ENCODE measurements at regions of chr16 and their contacts with region 1.

Region 1: GRCh38 chr16:47141773-47142485 is 1.8 kb downstream of the NETO2 start:
- DNase-seq: peak; percentile 56 to 67
- ATAC-seq: peak; percentile 79 to 82
- H3K4me3 ChIP-seq: peak overlapping the region; percentile 55 to 78 (median 64)
- H3K27ac ChIP-seq: peak overlapping the region in 1 of 4 donors; percentile 57
- H3K4me1 ChIP-seq: no peaks in the 10 kb centered on the region
- H3K27me3 ChIP-seq: no peaks in the 10 kb centered on the region
- CTCF ChIP-seq: peak; percentile 65 to 95 (median 76)
- POLR2A ChIP-seq: no peak

Region 2: DNA sequence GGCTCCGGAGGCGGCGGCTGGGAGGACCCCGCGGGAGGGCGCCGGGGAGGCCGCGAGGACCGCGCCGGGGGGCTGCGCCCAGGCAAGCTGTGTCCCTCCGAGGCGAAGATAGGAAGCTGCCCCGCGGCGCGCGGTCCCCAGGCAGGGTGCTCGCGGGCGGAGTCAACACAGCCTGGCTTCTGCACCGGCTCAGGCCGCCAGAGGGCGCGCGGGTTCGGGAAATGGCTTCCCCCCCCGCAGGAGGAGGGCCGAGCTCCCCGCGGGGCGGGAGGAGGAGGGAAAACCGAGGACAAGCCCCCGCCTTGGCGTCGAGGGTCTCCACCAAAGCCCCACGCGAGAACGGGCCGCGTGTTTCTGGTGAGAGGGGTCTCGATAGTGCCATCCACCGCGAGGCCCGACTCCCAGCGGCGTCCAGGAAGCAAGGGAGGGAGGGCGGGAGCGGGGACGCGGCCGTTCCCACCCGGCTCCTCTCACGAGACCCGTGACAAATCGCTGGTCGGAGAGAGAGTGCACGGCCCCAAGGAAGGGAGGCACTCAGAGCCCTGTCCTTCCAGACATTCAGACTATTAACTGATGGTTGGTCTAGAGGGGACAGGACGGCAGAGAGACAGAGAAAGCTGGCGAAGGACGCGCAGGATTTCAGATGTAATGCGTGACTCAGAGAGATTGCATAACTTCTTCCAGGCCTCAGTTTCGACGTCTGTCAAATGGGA is 104.0 kb before region 1 on chr16:
- in situ Hi-C with region 1: no loop called
- intact Hi-C with region 1: loop called (anchors 5 kb)
- DNase-seq: peak; percentile 56 to 68
- ATAC-seq: peak; percentile 94 to 97
- H3K4me3 ChIP-seq: peak overlapping the region; percentile 64 to 78 (median 66)
- H3K27ac ChIP-seq: peak overlapping the region in 2 of 4 donors; percentile 19 to 46
- H3K4me1 ChIP-seq: no peaks in the 10 kb centered on the region
- H3K27me3 ChIP-seq: no peaks in the 10 kb centered on the region
- CTCF ChIP-seq: peak; percentile 66 to 91 (median 88)
- POLR2A ChIP-seq: no peak

Region 3: DNA sequence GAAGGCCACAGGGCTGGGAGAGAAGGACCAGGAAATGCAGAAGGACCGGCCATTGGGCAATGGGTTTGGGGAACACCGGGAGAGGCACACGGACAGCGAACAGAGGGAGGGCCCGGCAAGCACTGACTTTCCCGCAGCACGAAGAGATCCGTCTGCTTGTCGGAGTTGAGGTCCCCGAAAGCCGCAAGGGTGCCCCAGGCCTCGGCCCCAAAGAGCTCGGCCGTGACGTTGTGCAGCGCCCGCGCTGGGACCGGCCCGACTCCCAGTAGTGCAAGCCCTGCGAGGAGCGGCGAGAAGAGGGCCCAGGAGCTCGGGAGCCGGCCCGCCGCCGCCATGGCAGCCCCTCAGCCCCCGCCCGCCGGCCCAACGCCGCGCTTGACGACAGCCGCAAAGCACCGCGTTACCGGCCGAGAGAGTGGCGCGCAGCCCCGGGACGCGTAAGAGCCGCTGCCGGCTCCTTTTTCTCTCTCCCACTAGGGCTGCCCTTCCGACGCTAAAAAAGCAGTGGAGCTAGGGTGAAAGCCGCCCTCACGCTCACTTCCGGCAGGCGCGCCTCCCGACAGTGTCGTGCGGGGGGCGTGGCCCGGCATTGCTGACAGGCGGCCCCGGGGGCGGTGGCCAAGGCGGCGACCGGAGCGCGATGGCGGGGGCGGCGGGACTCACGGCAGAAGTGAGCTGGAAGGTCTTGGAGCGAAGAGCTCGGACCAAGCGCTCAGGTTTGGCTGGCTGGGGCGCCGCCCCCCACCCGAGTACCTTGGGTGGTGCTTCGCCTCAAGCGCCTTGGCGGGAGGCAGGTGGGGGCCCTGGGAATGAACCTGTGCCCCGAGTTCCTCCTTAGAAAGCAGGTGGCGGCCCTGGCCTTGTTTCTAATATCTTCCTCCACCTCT is 319.0 kb after region 1 on chr16 and contains the starts of genes ITFG1 and PHKB:
- in situ Hi-C with region 1: no loop called
- intact Hi-C with region 1: loop called (anchors 5 kb)
- DNase-seq: peak; percentile 85 to 93
- ATAC-seq: peak; percentile 87 to 89
- H3K4me3 ChIP-seq: peak within 1 kb of the TSS; percentile 70 to 96 (median 92)
- H3K27ac ChIP-seq: peak within 1 kb of the TSS; percentile 93 to 99 (median 96)
- H3K4me1 ChIP-seq: peaks cover 54 to 60% of the 10 kb centered on the region in 2 donors
- H3K27me3 ChIP-seq: no peaks in the 10 kb centered on the region
- CTCF ChIP-seq: peak in 3 of 5 experiments; percentile 13 to 28 (median 22)
- POLR2A ChIP-seq: peak; percentile 76 to 86
- total RNA-seq, gene ITFG1: 20.9 to 37.3 (median 28.6) TPM
- total RNA-seq, gene PHKB: 61.0 to 91.6 (median 79.8) TPM

Region 4: GRCh38 chr16:48054881-48055601 is 913.1 kb after region 1 on chr16:
- in situ Hi-C with region 1: no loop called
- intact Hi-C with region 1: loop called (anchors 5 kb)
- DNase-seq: peak in 1 of 2 donors; percentile 14
- ATAC-seq: peak; percentile 66 to 70
- H3K4me3 ChIP-seq: peak overlapping the region in 3 of 4 donors; percentile 22 to 32 (median 28)
- H3K27ac ChIP-seq: no peak overlapping the region
- H3K4me1 ChIP-seq: no peaks in the 10 kb centered on the region
- H3K27me3 ChIP-seq: no peaks in the 10 kb centered on the region
- CTCF ChIP-seq: peak; percentile 49 to 79 (median 50)
- POLR2A ChIP-seq: no peak

Region 5: DNA sequence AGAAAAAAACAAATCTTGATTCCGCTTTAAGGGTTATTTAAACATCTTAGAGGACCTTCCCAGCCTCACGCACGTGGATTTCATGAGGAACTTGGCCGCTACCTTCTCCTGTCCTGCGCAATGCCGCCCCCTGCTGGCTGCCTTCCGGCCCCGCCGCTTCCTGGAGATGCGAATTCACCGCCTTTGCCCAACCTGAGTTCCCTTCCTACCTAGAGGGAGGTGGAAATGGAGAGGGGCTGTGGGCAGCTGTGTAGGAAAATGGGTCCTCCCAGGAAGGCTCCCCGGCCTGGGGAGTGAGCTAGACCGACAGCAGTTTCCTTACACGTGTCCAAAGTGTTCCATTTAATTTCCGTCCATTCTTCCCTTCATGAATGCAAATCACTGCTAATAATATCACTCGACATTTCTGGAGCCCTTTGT is 1014.9 kb after region 1 on chr16:
- in situ Hi-C with region 1: loop called (anchors 10 to 25 kb)
- intact Hi-C with region 1: loop called (anchors 2 kb)
- DNase-seq: peak; percentile 52 to 60
- ATAC-seq: peak; percentile 78 to 85
- H3K4me3 ChIP-seq: peak overlapping the region in 2 of 4 donors; percentile 34 to 49
- H3K27ac ChIP-seq: peak overlapping the region in 1 of 4 donors; percentile 42
- H3K4me1 ChIP-seq: peaks cover 0 to 4% of the 10 kb centered on the region in 2 donors
- H3K27me3 ChIP-seq: no peaks in the 10 kb centered on the region
- CTCF ChIP-seq: peak; percentile 73 to 98 (median 86)
- POLR2A ChIP-seq: no peak